CD4-positive, alpha-beta T cell (primary cell): ENCODE measurements at regions of chr9 and their contacts with region 1.

Region 1: GRCh38 chr9:129995409-129996160 is 47.4 kb downstream of the FNBP1 start:
- DNase-seq: peak in 4 of 14 experiments; percentile 40 to 63 (median 56)
- ATAC-seq: peak; percentile 39
- H3K4me3 ChIP-seq: no peak overlapping the region
- H3K4me3 Mint-ChIP-seq: peak overlapping the region; percentile 32
- H3K27ac ChIP-seq: peak overlapping the region; percentile 64 to 68
- H3K27ac Mint-ChIP-seq: peak overlapping the region; percentile 80
- H3K4me1 ChIP-seq: peaks cover 74% of the 10 kb centered on the region
- H3K4me1 Mint-ChIP-seq: peaks cover 76% of the 10 kb centered on the region
- H3K27me3 ChIP-seq: no peaks in the 10 kb centered on the region
- H3K27me3 Mint-ChIP-seq: no peaks in the 10 kb centered on the region
- CTCF ChIP-seq: no peak

Region 2: DNA sequence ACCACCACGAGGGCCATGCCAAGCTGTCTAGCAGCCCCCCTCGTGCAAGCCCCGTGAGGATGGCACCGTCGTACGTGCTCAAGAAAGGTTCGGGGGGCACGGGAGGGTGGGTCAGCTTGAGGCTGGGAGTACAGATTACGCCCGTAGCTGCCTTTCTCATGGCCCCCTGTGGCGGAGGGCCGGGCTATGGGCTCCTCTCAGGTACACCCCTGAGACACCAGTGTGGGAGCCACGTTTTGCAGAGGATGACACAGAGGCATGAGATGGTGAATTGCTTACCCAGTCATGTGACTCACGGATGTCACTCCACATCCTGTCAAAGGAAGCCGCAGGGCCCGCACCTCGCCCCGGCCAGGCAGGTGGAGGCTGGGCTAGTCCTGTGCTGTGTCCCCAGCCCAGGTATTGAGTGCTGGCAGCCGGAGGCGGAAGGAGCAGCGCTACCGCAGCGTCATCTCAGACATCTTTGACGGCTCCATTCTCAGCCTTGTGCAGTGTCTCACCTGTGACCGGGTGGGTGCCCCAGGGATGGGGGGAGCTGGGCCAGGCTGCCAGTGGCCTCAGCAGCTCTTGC is 126.6 kb before region 1 on chr9:
- CTCF ChIA-PET with region 1: no interaction called
- POLR2A ChIA-PET with region 1: no interaction called
- intact Hi-C with region 1: no loop called
- DNase-seq: peak; percentile 85 to 98 (median 92)
- ATAC-seq: peak; percentile 87
- H3K4me3 ChIP-seq: peak overlapping the region; percentile 40
- H3K4me3 Mint-ChIP-seq: peak overlapping the region; percentile 59
- H3K27ac ChIP-seq: peak overlapping the region; percentile 93 to 96
- H3K27ac Mint-ChIP-seq: peak overlapping the region; percentile 86
- H3K4me1 ChIP-seq: peaks cover 94% of the 10 kb centered on the region
- H3K4me1 Mint-ChIP-seq: peaks cover 75% of the 10 kb centered on the region
- H3K27me3 ChIP-seq: no peaks in the 10 kb centered on the region
- H3K27me3 Mint-ChIP-seq: no peaks in the 10 kb centered on the region
- CTCF ChIP-seq: no peak

Region 3: DNA sequence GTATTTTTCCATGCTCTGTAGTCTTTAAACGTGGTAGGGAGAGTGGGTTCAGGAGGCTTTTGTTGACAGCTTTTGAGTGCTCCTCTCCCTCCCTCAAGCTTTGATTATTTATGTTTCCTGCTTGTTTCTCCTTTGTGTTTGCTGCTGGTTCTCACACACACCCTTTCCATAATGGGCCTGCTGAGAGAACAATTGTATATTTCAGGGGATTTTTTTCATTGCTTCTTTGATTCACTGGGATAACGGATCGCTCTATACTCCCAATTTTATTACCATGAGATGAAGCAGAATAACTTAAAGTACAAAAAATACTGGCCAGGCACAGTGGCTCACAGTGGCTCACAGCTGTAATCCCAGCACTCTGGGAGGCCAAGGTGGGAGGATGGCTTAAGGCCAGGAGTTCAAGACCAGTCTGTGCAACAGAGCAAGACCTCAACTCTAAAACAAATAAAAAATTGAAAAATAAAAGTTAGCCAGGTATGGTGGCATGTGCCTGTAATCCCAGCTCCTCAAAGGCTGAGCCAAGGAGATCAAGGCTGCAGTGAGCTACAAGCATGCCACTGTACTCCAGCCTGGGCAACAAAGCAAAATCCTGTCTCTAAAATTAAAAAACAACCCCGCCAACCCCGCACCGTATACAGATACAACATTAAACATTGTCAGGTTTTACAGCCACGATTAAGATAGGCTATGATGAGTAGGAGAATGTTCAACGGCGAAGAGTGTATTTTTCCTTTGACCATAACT is 93.4 kb before region 1 on chr9:
- CTCF ChIA-PET with region 1: no interaction called
- POLR2A ChIA-PET with region 1: no interaction called
- intact Hi-C with region 1: no loop called
- DNase-seq: no peak
- ATAC-seq: no peak
- H3K4me3 ChIP-seq: no peak overlapping the region
- H3K4me3 Mint-ChIP-seq: no peak overlapping the region
- H3K27ac ChIP-seq: peak overlapping the region; percentile 3 to 41
- H3K27ac Mint-ChIP-seq: peak overlapping the region; percentile 84
- H3K4me1 ChIP-seq: peaks cover 24% of the 10 kb centered on the region
- H3K4me1 Mint-ChIP-seq: peaks cover 56% of the 10 kb centered on the region
- H3K27me3 ChIP-seq: no peaks in the 10 kb centered on the region
- H3K27me3 Mint-ChIP-seq: no peaks in the 10 kb centered on the region
- CTCF ChIP-seq: no peak

Region 4: GRCh38 chr9:130029223-130029973 is 33.8 kb after region 1 on chr9:
- CTCF ChIA-PET with region 1: interaction called, 27 read pairs
- POLR2A ChIA-PET with region 1: interaction called, 6 read pairs
- intact Hi-C with region 1: loop called in 1 of 2 experiments (anchors 5 kb)
- DNase-seq: peak in 1 of 14 experiments; percentile 46
- ATAC-seq: no peak
- H3K4me3 ChIP-seq: peak overlapping the region; percentile 3
- H3K4me3 Mint-ChIP-seq: peak overlapping the region; percentile 32
- H3K27ac ChIP-seq: peak overlapping the region; percentile 12 to 78
- H3K27ac Mint-ChIP-seq: peak overlapping the region; percentile 92
- H3K4me1 ChIP-seq: peaks cover 83% of the 10 kb centered on the region
- H3K4me1 Mint-ChIP-seq: peaks cover 93% of the 10 kb centered on the region
- H3K27me3 ChIP-seq: no peaks in the 10 kb centered on the region
- H3K27me3 Mint-ChIP-seq: no peaks in the 10 kb centered on the region
- CTCF ChIP-seq: no peak

Region 5: GRCh38 chr9:130034570-130034969 is 39.0 kb after region 1 on chr9:
- CTCF ChIA-PET with region 1: interaction called, 27 read pairs
- POLR2A ChIA-PET with region 1: interaction called, 10 read pairs
- intact Hi-C with region 1: loop called in 1 of 2 experiments (anchors 5 kb)
- DNase-seq: peak in 3 of 14 experiments; percentile 41 to 64 (median 58)
- ATAC-seq: no peak
- H3K4me3 ChIP-seq: no peak overlapping the region
- H3K4me3 Mint-ChIP-seq: peak overlapping the region; percentile 65
- H3K27ac ChIP-seq: no peak overlapping the region
- H3K27ac Mint-ChIP-seq: peak overlapping the region; percentile 99
- H3K4me1 ChIP-seq: peaks cover 83% of the 10 kb centered on the region
- H3K4me1 Mint-ChIP-seq: peaks cover 91% of the 10 kb centered on the region
- H3K27me3 ChIP-seq: no peaks in the 10 kb centered on the region
- H3K27me3 Mint-ChIP-seq: no peaks in the 10 kb centered on the region
- CTCF ChIP-seq: no peak

Region 6: DNA sequence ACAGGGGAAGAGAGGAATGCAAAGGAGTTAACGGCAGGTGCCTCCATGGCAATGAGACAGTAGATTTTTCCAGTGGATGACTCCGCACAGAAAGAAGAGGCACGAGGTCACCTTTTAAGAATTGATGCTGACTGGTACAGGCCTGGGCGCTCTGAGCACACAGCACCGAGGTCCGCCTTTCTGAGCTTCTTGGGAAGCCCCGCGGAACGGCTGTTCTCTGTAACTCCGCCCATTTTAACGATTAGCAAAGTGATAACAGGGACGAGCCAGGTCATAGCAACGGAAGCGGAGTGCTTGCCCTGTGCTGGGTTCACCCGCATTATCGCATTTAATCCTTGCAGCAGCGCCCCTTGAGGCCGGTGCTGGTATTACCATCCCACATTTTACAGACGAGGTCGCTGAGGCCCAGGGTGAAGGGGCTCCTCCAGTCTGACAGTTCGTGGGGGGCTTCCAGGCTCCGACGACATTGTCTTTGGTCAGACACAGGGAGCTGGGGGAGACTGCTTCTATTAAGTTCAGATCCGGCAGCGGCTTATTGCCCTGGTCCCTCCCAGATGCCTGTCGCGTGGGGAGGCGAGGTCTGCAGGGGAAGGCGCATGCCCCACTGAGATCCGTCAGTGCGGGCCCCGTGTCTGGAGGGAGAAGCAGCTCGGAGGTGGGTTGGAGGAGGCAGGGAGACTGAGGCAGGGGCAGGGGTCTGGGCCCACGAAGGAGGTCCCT is 247.6 kb after region 1 on chr9:
- CTCF ChIA-PET with region 1: no interaction called
- POLR2A ChIA-PET with region 1: no interaction called
- intact Hi-C with region 1: no loop called
- DNase-seq: peak; percentile 64 to 88 (median 80)
- ATAC-seq: peak; percentile 85
- H3K4me3 ChIP-seq: peak overlapping the region; percentile 25
- H3K4me3 Mint-ChIP-seq: peak overlapping the region; percentile 57
- H3K27ac ChIP-seq: no peak overlapping the region
- H3K27ac Mint-ChIP-seq: no peak overlapping the region
- H3K4me1 ChIP-seq: peaks cover 30% of the 10 kb centered on the region
- H3K4me1 Mint-ChIP-seq: peaks cover 27% of the 10 kb centered on the region
- H3K27me3 ChIP-seq: no peaks in the 10 kb centered on the region
- H3K27me3 Mint-ChIP-seq: no peaks in the 10 kb centered on the region
- CTCF ChIP-seq: peak; percentile 98